HepG2 (cell line): ENCODE measurements at regions of chr16 and their contacts with region 1.

Region 1: GRCh38 chr16:10078541-10078949 is 103.7 kb downstream of the GRIN2A start:
- DNase-seq: peak; percentile 27
- ATAC-seq: peak; percentile 73
- H3K4me3 ChIP-seq: no peak overlapping the region
- H3K27ac ChIP-seq: no peak overlapping the region
- H3K4me1 ChIP-seq: peaks cover 10% of the 10 kb centered on the region
- H3K27me3 ChIP-seq: no peaks in the 10 kb centered on the region; a peak in 1 of 5 replicates
- CTCF ChIP-seq: peak; percentile 31
- EP300 ChIP-seq: no peak
- POLR2A ChIP-seq: no peak
- RAD21 ChIP-seq: no peak

Region 2: GRCh38 chr16:9953908-9954570 is 124.5 kb before region 1 on chr16:
- CTCF ChIA-PET with region 1: no interaction called
- POLR2A ChIA-PET with region 1: no interaction called
- in situ Hi-C with region 1: no loop called
- intact Hi-C with region 1: no loop called
- DNase-seq: no peak
- ATAC-seq: no peak
- H3K4me3 ChIP-seq: no peak overlapping the region
- H3K27ac ChIP-seq: no peak overlapping the region
- H3K4me1 ChIP-seq: no peaks in the 10 kb centered on the region
- H3K27me3 ChIP-seq: peaks cover 1 to 27% of the 10 kb centered on the region in 2 experiments; a peak in 3 of 5 replicates
- CTCF ChIP-seq: no peak
- EP300 ChIP-seq: no peak
- POLR2A ChIP-seq: no peak
- RAD21 ChIP-seq: no peak

Region 3: GRCh38 chr16:9996221-9996620 is 82.3 kb before region 1 on chr16:
- CTCF ChIA-PET with region 1: no interaction called
- POLR2A ChIA-PET with region 1: no interaction called
- in situ Hi-C with region 1: no loop called
- intact Hi-C with region 1: no loop called
- DNase-seq: no peak
- ATAC-seq: no peak
- H3K4me3 ChIP-seq: no peak overlapping the region
- H3K27ac ChIP-seq: no peak overlapping the region
- H3K4me1 ChIP-seq: no peaks in the 10 kb centered on the region
- H3K27me3 ChIP-seq: no peaks in the 10 kb centered on the region
- CTCF ChIP-seq: no peak
- EP300 ChIP-seq: no peak
- POLR2A ChIP-seq: no peak
- RAD21 ChIP-seq: no peak

Region 4: DNA sequence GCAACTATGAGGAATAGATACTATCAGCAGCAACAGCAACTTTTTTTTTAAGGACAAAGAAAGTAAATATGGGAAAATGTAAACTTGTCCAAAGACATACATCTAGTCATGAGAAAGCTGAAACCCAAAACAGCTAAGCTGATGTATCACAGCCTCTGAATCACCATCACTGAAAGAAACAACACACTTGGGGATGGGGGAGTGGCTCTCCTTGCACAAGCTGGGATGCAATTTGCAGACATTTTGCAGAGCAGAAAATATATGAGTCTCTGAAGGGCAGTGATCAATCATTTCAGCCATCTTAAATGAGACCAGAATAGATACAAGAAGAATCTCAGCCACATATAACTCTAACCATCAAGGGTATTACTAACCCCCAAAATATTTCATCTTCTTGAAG is 24.6 kb after region 1 on chr16:
- CTCF ChIA-PET with region 1: no interaction called
- POLR2A ChIA-PET with region 1: no interaction called
- in situ Hi-C with region 1: no loop called
- intact Hi-C with region 1: no loop called
- DNase-seq: no peak
- ATAC-seq: no peak
- H3K4me3 ChIP-seq: no peak overlapping the region
- H3K27ac ChIP-seq: no peak overlapping the region
- H3K4me1 ChIP-seq: no peaks in the 10 kb centered on the region
- H3K27me3 ChIP-seq: peaks cover 0 to 11% of the 10 kb centered on the region in 2 experiments; a peak in 2 of 5 replicates
- CTCF ChIP-seq: no peak
- EP300 ChIP-seq: no peak
- POLR2A ChIP-seq: no peak
- RAD21 ChIP-seq: no peak

Region 5: DNA sequence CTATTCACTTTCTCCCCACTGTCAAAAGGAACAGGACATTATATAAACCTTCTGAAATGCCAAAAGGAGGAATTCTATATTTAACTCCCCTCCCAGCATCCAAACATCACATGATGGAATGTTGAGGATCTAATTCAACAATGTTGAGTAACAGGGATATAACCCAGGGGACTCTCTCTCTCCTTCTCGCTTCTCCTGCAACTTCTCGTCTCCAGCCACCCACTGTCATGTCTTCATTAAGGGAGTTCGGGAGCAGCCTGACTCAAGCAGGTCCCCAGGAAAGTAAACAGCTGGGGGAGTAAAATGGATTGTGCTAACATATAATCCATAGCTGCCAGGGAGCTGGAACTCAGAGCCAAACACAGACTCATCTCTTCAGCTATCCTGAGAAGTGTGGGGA is 52.0 kb after region 1 on chr16:
- CTCF ChIA-PET with region 1: no interaction called
- POLR2A ChIA-PET with region 1: no interaction called
- in situ Hi-C with region 1: loop called (anchors 10 kb)
- intact Hi-C with region 1: no loop called
- DNase-seq: no peak
- ATAC-seq: no peak
- H3K4me3 ChIP-seq: no peak overlapping the region
- H3K27ac ChIP-seq: no peak overlapping the region
- H3K4me1 ChIP-seq: no peaks in the 10 kb centered on the region
- H3K27me3 ChIP-seq: peaks cover 0 to 4% of the 10 kb centered on the region in 2 experiments; a peak in 1 of 5 replicates
- CTCF ChIP-seq: no peak
- EP300 ChIP-seq: no peak
- POLR2A ChIP-seq: no peak
- RAD21 ChIP-seq: no peak